ENCODE measurements at regions of chr1 and their contacts with region 1.

Region 1: DNA sequence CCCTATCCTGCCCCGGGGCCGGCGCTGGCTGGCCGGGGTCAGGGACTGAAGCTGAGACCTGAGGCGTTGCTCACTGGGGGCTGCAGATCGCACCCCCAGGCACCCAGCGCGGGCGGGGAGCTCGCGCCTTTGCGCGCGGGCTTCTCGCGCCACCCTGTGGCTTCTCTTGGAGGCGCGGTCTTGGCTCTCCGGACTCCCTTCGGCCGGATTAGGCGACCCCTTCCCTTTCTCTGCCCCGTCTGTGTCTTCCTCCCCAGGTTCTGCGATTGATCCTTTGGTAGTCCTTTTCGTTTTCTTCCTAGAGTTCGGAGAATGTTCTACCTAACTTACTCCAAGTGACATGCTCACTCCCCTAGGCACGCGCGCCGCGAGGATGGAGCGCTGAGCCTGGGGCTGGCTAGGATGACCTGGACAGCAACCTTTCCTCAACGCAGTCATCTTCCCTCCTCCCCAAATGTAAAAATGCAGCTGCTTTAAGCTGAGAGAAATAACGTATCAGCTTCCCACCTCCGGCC is 495 bp upstream of the NTRK1 start:
- DNase-seq: peak; percentile 64
- ATAC-seq: peak; percentile 57
- H3K4me3 Mint-ChIP-seq: peak overlapping the region; percentile 74
- H3K27ac Mint-ChIP-seq: no peak overlapping the region
- H3K4me1 Mint-ChIP-seq: peaks cover 42% of the 10 kb centered on the region
- H3K27me3 Mint-ChIP-seq: peaks cover 58% of the 10 kb centered on the region
- CTCF ChIP-seq: peak; percentile 97

Region 2: DNA sequence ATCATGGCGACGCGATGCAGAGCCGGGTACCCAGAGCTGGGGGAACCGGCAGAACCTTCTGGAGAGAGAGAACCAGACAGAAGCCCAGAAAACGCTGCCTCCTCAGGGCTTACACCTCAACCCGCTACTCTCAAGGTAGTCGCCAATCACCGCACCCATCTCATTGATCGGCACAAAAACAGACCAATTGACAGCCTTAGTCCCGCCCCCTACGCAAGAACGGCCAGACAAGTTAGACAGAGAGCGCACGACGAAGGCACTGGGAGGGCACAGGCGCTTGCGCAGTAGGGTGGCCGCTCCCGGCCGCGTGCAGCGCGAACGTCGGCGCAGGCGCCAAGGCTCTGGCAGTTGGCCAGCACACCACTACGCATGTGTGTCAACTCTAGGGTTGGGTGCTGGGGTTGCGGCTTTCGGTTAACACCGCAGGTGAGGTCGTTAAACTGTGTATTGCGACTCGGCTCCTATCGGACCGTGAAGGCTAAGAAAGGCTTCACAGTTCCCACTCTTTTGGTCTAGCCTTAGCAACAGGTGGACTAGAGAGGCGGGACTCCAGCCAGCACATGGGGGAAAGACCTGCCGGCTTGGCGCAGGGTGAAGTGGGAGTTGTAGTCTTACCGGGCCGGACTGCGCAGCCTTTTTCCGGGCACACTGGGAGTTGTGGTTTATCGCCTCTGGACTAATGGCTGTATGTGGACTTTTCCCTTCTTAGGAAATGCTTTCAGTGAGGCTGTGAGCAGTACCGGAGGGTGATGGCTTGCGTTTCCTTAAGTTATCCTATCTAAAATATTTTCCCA is 521.8 kb before region 1 on chr1 and contains the starts of genes CCT3 and TSACC:
- CTCF ChIA-PET with region 1: no interaction called
- POLR2A ChIA-PET with region 1: no interaction called
- intact Hi-C with region 1: no loop called
- DNase-seq: peak; percentile 99
- ATAC-seq: peak; percentile 95
- H3K4me3 Mint-ChIP-seq: peak within 1 kb of the TSS; percentile 98
- H3K27ac Mint-ChIP-seq: peak within 1 kb of the TSS; percentile 99
- H3K4me1 Mint-ChIP-seq: peaks cover 27% of the 10 kb centered on the region
- H3K27me3 Mint-ChIP-seq: no peaks in the 10 kb centered on the region
- CTCF ChIP-seq: no peak
- total RNA-seq, gene CCT3: 379 to 388 TPM
- total RNA-seq, gene TSACC: 0.72 TPM in 1 of 2 experiments, not detected in the other

Region 3: GRCh38 chr1:156689035-156689952 is 170.9 kb before region 1 on chr1:
- CTCF ChIA-PET with region 1: interaction called, 56 read pairs
- POLR2A ChIA-PET with region 1: no interaction called
- intact Hi-C with region 1: no loop called
- DNase-seq: peak; percentile 86
- ATAC-seq: peak; percentile 98
- H3K4me3 Mint-ChIP-seq: no peak overlapping the region
- H3K27ac Mint-ChIP-seq: no peak overlapping the region
- H3K4me1 Mint-ChIP-seq: peaks cover 29% of the 10 kb centered on the region
- H3K27me3 Mint-ChIP-seq: peaks cover 51% of the 10 kb centered on the region
- CTCF ChIP-seq: peak; percentile 95

Region 4: GRCh38 chr1:156773607-156774006 is 86.6 kb before region 1 on chr1:
- CTCF ChIA-PET with region 1: interaction called, 10 read pairs
- POLR2A ChIA-PET with region 1: interaction called, 5 read pairs
- intact Hi-C with region 1: no loop called
- DNase-seq: no peak
- ATAC-seq: peak; percentile 25
- H3K4me3 Mint-ChIP-seq: no peak overlapping the region
- H3K27ac Mint-ChIP-seq: no peak overlapping the region
- H3K4me1 Mint-ChIP-seq: peaks cover 68% of the 10 kb centered on the region
- H3K27me3 Mint-ChIP-seq: no peaks in the 10 kb centered on the region
- CTCF ChIP-seq: peak; percentile 19

Region 5: GRCh38 chr1:156804572-156805243 is 55.5 kb before region 1 on chr1:
- CTCF ChIA-PET with region 1: interaction called, 214 read pairs
- POLR2A ChIA-PET with region 1: interaction called, 20 read pairs
- intact Hi-C with region 1: loop called (anchors 5 kb)
- DNase-seq: no peak
- ATAC-seq: no peak
- H3K4me3 Mint-ChIP-seq: no peak overlapping the region
- H3K27ac Mint-ChIP-seq: peak overlapping the region; percentile 39
- H3K4me1 Mint-ChIP-seq: peaks cover 36% of the 10 kb centered on the region
- H3K27me3 Mint-ChIP-seq: no peaks in the 10 kb centered on the region
- CTCF ChIP-seq: no peak

Region 6: GRCh38 chr1:156838981-156839410 is 21.2 kb before region 1 on chr1:
- CTCF ChIA-PET with region 1: interaction called, 273 read pairs
- POLR2A ChIA-PET with region 1: interaction called, 12 read pairs
- intact Hi-C with region 1: no loop called
- DNase-seq: peak; percentile 64
- ATAC-seq: peak; percentile 54
- H3K4me3 Mint-ChIP-seq: no peak overlapping the region
- H3K27ac Mint-ChIP-seq: no peak overlapping the region
- H3K4me1 Mint-ChIP-seq: peaks cover 41% of the 10 kb centered on the region
- H3K27me3 Mint-ChIP-seq: peaks cover 39% of the 10 kb centered on the region
- CTCF ChIP-seq: peak; percentile 95

Region 7: DNA sequence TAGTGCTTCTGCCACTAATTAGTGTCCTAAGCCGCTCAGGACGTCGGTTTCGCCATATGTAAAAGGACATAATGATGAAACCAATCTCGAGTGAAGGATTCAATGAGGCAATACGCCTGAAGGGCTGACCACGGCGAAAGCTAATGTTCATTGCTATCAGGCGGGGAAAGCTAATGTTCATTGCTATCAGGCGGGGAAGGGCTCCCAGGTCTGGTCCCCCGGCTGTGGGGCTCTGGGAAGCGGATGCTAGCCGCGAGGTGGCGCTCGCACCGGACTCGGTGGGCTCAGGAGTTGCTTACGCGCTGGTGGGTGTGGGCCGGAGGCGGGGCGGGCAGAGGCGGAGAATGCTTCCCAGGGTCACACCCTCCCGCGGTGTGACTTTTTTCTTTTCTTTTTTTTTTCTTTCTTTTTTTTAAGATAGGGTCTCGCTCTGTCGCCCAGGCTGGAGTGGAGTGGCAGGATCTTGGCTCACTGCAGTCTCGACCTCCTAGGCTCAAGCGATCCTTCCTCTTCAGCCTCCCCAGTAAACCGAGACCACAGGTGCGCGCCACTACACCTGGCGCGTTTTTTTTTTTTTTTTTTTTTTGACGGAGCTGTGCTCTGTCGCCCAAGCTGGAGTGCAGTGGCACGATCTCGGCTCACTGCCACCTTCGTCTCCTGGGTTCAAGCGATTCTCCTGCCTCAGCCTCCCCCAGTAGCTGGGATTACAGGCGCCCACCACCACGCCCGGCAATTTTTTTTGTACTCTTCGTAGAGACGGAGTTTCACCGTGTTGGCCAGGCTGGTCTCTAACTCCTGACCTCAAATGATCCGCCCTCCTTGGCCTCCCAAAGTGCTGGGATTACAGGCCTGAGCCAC is 32.2 kb after region 1 on chr1:
- CTCF ChIA-PET with region 1: interaction called, 75 read pairs
- POLR2A ChIA-PET with region 1: interaction called, 4 read pairs
- intact Hi-C with region 1: no loop called
- DNase-seq: peak; percentile 95
- ATAC-seq: peak; percentile 96
- H3K4me3 Mint-ChIP-seq: peak overlapping the region; percentile 35
- H3K27ac Mint-ChIP-seq: no peak overlapping the region
- H3K4me1 Mint-ChIP-seq: peaks cover 7% of the 10 kb centered on the region
- H3K27me3 Mint-ChIP-seq: peaks cover 49% of the 10 kb centered on the region
- CTCF ChIP-seq: peak; percentile 76